Colonic mucosa (tissue), 4 donors: ENCODE measurements at regions of chr9 and their contacts with region 1.

Region 1: GRCh38 chr9:101705135-101705661 is 33.2 kb downstream of the GRIN3A start:
- DNase-seq: peak; percentile 87
- H3K4me3 ChIP-seq: peak overlapping the region; percentile 2
- H3K27ac ChIP-seq: peak overlapping the region; percentile 62
- H3K4me1 ChIP-seq: no peaks in the 10 kb centered on the region
- H3K27me3 ChIP-seq: no peaks in the 10 kb centered on the region
- CTCF ChIP-seq: no peak

Region 2: DNA sequence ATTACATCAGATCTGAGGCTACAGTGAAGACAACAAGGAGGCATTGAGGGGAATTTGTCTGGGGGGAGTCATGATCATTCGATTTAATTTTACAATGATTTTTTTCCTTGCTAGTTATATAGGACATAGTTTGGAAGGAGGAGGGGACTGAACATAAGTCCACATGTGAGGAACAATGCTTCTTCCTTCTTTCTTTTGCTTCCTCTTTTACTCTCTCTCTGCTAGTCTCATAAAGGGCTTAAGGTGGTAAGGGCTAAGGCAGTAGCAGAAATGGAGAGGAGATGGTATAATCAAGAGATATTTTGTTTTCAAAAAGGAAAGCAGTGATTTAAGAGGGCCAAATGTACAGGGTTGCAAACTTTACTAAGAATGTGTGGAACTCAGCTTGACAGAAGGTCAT is 31.0 kb before region 1 on chr9:
- intact Hi-C with region 1: loop called (anchors 5 kb)
- DNase-seq: no peak
- H3K4me3 ChIP-seq: no peak overlapping the region
- H3K27ac ChIP-seq: peak overlapping the region; percentile 87
- H3K4me1 ChIP-seq: no peaks in the 10 kb centered on the region
- H3K27me3 ChIP-seq: no peaks in the 10 kb centered on the region
- CTCF ChIP-seq: no peak

Region 3: DNA sequence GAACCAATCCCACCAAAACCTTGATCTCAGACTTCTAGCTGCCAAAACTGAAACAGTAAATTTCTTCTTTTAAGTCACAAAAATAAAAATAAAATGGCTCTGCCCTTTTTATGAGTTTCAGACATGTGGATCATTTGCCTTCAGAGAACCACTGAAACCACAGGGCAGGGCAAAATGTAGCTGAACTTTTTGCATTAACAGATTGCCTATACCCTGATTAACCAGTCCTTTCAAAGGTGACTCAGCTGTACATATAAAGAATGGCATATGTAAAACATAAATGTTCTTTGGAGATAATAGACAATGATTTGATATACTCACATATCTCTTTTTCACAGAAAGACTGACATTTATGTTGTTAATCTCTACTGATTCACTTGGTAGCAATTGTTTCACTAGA is 220.3 kb after region 1 on chr9:
- intact Hi-C with region 1: no loop called
- DNase-seq: no peak
- H3K4me3 ChIP-seq: no peak overlapping the region
- H3K27ac ChIP-seq: no peak overlapping the region
- H3K4me1 ChIP-seq: no peaks in the 10 kb centered on the region
- H3K27me3 ChIP-seq: no peaks in the 10 kb centered on the region
- CTCF ChIP-seq: no peak